ENCODE measurements at regions of chr1 and their contacts with region 1.

Region 1: GRCh38 chr1:45643978-45644377 is 20.1 kb upstream of the CCDC17 start:
- H3K4me3 Mint-ChIP-seq: no peak overlapping the region
- H3K27ac Mint-ChIP-seq: no peak overlapping the region
- H3K4me1 Mint-ChIP-seq: peaks cover 22% of the 10 kb centered on the region
- H3K27me3 Mint-ChIP-seq: no peaks in the 10 kb centered on the region

Region 2: DNA sequence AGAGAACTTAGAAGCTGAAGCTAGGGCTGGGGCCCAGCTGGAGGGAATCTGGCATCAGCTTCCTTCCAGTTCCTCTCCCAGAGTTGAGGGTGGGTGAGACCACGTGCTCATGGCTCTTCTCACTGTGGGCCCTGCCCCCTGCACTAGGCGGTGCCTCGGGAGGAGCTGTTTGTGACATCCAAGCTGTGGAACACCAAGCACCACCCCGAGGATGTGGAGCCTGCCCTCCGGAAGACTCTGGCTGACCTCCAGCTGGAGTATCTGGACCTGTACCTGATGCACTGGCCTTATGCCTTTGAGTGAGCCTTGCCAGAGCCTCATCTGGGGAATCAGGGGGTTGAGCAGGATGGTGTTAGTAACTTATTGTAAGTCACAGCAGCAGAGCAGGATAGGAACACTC is 77.3 kb before region 1 on chr1:
- intact Hi-C with region 1: no loop called
- H3K4me3 Mint-ChIP-seq: no peak overlapping the region
- H3K27ac Mint-ChIP-seq: peak overlapping the region; percentile 74
- H3K4me1 Mint-ChIP-seq: peaks cover 51% of the 10 kb centered on the region
- H3K27me3 Mint-ChIP-seq: no peaks in the 10 kb centered on the region

Region 3: GRCh38 chr1:45589861-45590260 is 54.1 kb before region 1 on chr1:
- intact Hi-C with region 1: loop called (anchors 10 kb)
- H3K4me3 Mint-ChIP-seq: no peak overlapping the region
- H3K27ac Mint-ChIP-seq: no peak overlapping the region
- H3K4me1 Mint-ChIP-seq: peaks cover 20% of the 10 kb centered on the region
- H3K27me3 Mint-ChIP-seq: no peaks in the 10 kb centered on the region